ENCODE measurements at regions of chr13 and their contacts with region 1.

Region 1: DNA sequence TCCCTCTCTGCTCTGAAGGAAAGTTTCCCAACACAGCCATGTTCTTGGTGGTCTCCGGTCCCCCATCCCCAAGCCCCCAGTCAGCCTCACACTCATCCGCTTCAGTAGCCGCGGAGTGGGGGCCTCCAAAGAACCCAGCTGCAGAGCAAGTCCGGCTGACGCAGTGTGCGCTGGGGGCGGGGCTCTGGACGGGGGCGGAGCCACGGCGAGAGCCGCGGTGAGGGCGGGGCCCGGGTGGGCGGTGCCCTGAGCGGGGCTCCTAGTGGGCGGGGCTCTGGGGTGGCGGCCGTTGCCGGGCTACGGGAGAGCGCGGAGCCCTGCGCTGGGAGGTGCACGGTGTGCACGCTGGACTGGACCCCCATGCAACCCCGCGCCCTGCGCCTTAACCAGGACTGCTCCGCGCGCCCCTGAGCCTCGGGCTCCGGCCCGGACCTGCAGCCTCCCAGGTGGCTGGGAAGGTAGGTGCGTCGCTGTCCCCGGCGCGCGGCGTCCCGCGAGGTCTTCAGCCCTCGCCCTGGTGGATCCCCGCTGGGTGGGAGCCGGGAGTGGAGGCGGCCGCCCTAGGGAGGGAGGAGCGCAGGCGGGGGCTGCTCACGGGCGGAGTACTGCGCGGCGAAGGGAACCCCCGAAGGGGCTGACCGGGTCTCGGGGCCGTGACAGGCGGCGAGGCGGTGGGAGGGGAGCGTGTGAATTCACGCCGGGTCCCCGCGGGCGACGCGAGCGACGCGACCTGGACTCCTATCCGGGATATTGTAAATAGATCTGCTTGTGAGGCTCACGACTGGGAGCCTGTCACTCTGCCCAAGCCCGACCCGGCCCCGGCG is 9.1 kb downstream of the TNFRSF19 start:
- DNase-seq: peak; percentile 92
- H3K4me3 Mint-ChIP-seq: peak overlapping the region; percentile 76
- H3K27ac Mint-ChIP-seq: no peak overlapping the region
- H3K4me1 Mint-ChIP-seq: peaks cover 17% of the 10 kb centered on the region
- H3K27me3 Mint-ChIP-seq: peaks cover 38% of the 10 kb centered on the region

Region 2: DNA sequence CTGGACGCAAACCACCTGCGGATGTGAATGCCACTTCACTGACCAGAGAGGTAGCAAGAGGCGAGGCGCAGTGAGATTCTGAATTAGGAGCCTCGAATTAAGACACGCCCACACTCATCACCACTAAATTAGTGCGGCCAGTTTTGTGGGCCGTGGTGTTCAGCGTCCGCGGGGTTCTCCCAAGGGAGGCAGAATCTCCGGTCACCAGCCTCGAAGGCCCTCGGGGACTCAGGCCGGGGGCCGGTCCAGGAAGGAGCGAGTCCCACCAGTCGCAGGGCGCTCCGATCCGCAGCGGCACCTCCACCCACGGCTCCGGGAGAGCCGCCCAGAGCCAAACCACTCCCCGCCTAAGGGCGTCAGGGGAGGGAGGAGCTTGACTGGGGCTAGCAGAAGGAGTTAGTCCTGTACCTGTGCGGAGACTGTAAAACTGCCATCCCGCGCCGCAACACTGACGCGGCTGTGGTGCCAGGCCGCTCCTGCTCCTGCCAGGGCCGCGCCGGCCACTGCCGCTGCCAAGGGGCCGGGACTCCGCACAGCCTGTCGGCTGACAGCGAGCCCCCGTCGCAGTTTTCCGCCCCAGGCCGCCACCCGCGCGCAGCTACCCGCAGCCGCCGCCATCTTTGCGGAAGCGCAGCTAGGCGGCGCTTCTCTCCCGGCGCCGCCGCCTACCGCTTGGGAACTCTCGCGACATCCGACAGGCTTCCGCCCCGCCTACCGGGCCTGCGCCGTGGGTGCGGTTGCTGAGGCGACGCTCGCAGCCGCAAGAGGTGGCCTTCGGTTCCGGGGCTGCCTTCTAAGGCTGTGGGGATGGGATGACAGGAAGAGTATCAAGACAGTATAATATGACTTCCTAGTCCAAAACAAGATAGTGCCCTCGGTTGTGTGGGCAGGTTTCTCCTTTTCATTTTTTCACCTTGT is 1975.5 kb before region 1 on chr13 and contains the start of gene MICU2:
- CTCF ChIA-PET with region 1: no interaction called
- intact Hi-C with region 1: loop called (anchors 2 kb)
- DNase-seq: peak; percentile 97
- H3K4me3 Mint-ChIP-seq: peak within 1 kb of the TSS; percentile 84
- H3K27ac Mint-ChIP-seq: peak within 1 kb of the TSS; percentile 90
- H3K4me1 Mint-ChIP-seq: peaks cover 28% of the 10 kb centered on the region
- H3K27me3 Mint-ChIP-seq: peaks cover 3% of the 10 kb centered on the region
- total RNA-seq, gene MICU2: 27.5 to 28.2 TPM

Region 3: GRCh38 chr13:23558675-23559536 is 20.4 kb before region 1 on chr13:
- CTCF ChIA-PET with region 1: no interaction called
- intact Hi-C with region 1: loop called (anchors 2 kb)
- DNase-seq: peak; percentile 45
- H3K4me3 Mint-ChIP-seq: no peak overlapping the region
- H3K27ac Mint-ChIP-seq: no peak overlapping the region
- H3K4me1 Mint-ChIP-seq: peaks cover 2% of the 10 kb centered on the region
- H3K27me3 Mint-ChIP-seq: peaks cover 6% of the 10 kb centered on the region

Region 4: GRCh38 chr13:23871616-23872220 is 292.4 kb after region 1 on chr13:
- CTCF ChIA-PET with region 1: no interaction called
- intact Hi-C with region 1: loop called (anchors 5 kb)
- DNase-seq: no peak
- H3K4me3 Mint-ChIP-seq: no peak overlapping the region
- H3K27ac Mint-ChIP-seq: no peak overlapping the region
- H3K4me1 Mint-ChIP-seq: no peaks in the 10 kb centered on the region
- H3K27me3 Mint-ChIP-seq: no peaks in the 10 kb centered on the region

Region 5: GRCh38 chr13:23966691-23967615 is 387.7 kb after region 1 on chr13:
- CTCF ChIA-PET with region 1: no interaction called
- intact Hi-C with region 1: loop called (anchors 2 kb)
- DNase-seq: peak; percentile 38
- H3K4me3 Mint-ChIP-seq: peak overlapping the region; percentile 29
- H3K27ac Mint-ChIP-seq: peak overlapping the region; percentile 72
- H3K4me1 Mint-ChIP-seq: peaks cover 29% of the 10 kb centered on the region
- H3K27me3 Mint-ChIP-seq: no peaks in the 10 kb centered on the region

Region 6: GRCh38 chr13:24254146-24254841 is 675.0 kb after region 1 on chr13:
- CTCF ChIA-PET with region 1: no interaction called
- intact Hi-C with region 1: loop called (anchors 10 kb)
- DNase-seq: peak; percentile 79
- H3K4me3 Mint-ChIP-seq: peak overlapping the region; percentile 87
- H3K27ac Mint-ChIP-seq: peak overlapping the region; percentile 96
- H3K4me1 Mint-ChIP-seq: peaks cover 77% of the 10 kb centered on the region
- H3K27me3 Mint-ChIP-seq: no peaks in the 10 kb centered on the region

Measured in activated naive CD4-positive, alpha-beta T cell treated with anti-CD3 and anti-CD28 coated beads for 36 hours (primary cell).